CD14-positive monocyte (primary cell): ENCODE measurements at regions of chr10 and their contacts with region 1.

Region 1: GRCh38 chr10:68720793-68721672 is at the start of gene CCAR1:
- DNase-seq: peak; percentile 98 to 99 (median 98)
- H3K4me3 ChIP-seq: peak within 1 kb of the TSS; percentile 87 to 95 (median 89)
- H3K4me3 Mint-ChIP-seq: peak within 1 kb of the TSS; percentile 96 to 98
- H3K27ac ChIP-seq: peak within 1 kb of the TSS; percentile 92 to 93
- H3K27ac Mint-ChIP-seq: peak within 1 kb of the TSS; percentile 96 to 99 (median 98)
- H3K4me1 ChIP-seq: peaks cover 11% of the 10 kb centered on the region in 2 donors
- H3K4me1 Mint-ChIP-seq: peaks cover 10% of the 10 kb centered on the region
- H3K27me3 ChIP-seq: no peaks in the 10 kb centered on the region
- H3K27me3 Mint-ChIP-seq: peaks cover 3 to 8% (median 5%) of the 10 kb centered on the region in 3 donors
- CTCF ChIP-seq: no peak
- polyA plus RNA-seq, gene CCAR1: 16.7 to 26.3 (median 23.4) TPM

Region 2: DNA sequence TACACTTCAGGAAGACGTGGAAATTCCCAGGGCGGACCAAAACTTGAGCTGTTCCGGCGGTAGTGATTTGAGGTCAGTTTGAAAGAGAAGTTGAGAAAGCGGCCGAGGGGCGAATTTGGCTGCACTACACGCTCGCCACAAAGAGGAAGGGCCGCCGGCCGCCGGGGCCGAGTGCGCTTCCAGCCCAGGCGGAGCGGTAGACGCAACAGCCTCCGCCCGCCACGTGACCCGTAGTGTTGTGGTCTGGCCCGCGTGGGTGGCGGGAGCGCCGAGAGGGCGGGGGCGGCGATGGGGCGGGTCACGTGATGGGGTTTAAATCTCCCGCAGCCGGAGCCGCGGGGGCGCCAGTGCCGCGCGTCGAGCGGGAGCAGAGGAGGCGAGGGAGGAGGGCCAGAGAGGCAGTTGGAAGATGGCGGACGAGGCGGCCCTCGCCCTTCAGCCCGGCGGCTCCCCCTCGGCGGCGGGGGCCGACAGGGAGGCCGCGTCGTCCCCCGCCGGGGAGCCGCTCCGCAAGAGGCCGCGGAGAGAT is 836.7 kb before region 1 on chr10 and contains the start of gene SIRT1:
- intact Hi-C with region 1: loop called in 1 of 2 experiments (anchors 10 kb)
- DNase-seq: peak; percentile 96 to 97 (median 97)
- H3K4me3 ChIP-seq: peak within 1 kb of the TSS; percentile 59 to 89 (median 69)
- H3K4me3 Mint-ChIP-seq: peak within 1 kb of the TSS; percentile 89 to 94
- H3K27ac ChIP-seq: peak within 1 kb of the TSS; percentile 73 to 87
- H3K27ac Mint-ChIP-seq: peak within 1 kb of the TSS; percentile 93 to 97 (median 96)
- H3K4me1 ChIP-seq: peaks cover 24 to 32% of the 10 kb centered on the region in 2 donors
- H3K4me1 Mint-ChIP-seq: peaks cover 30% of the 10 kb centered on the region
- H3K27me3 ChIP-seq: no peaks in the 10 kb centered on the region
- H3K27me3 Mint-ChIP-seq: peaks cover 0 to 4% (median 2%) of the 10 kb centered on the region in 3 donors
- CTCF ChIP-seq: no peak
- polyA plus RNA-seq, gene SIRT1: 4.4 to 8.4 (median 8.3) TPM

Region 3: DNA sequence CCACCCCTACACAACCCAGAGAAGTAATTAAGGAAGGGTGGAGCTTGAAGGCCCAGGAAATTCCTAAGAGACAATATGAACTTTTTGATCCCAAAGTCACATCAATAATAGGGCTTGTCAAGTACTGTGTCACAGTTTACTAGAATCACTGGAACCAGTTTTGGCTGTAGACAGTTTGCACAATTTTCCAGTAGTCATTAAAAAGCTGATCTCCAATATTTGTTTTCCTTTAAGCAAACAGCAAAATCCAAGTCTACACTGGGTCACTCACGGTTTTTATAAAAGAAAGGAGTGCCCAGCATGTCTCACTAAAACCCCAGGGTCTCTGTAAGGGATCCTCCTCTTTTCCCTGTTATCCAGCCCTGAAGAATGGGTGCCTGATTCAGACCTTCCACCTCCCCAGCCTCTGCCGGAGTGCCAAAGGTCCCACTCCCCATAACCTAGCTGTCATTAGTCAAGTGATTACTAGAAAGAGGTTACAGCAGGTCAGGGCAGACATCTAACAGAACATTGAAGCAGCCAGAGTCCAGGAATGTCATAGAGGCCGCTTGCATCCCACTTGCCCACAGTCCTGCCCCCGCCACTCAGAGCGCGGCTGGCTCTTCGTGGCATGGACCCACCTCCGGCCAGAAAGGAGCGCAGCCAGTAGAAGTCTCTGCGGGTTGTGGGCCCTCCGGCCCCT is 194.3 kb before region 1 on chr10:
- intact Hi-C with region 1: loop called in 1 of 2 experiments (anchors 10 kb)
- DNase-seq: peak in 1 of 3 donors; percentile 9
- H3K4me3 ChIP-seq: peak overlapping the region; percentile 85 to 99 (median 92)
- H3K4me3 Mint-ChIP-seq: peak overlapping the region; percentile 86 to 91
- H3K27ac ChIP-seq: peak overlapping the region; percentile 75 to 95
- H3K27ac Mint-ChIP-seq: peak overlapping the region; percentile 82 to 95 (median 91)
- H3K4me1 ChIP-seq: peaks cover 14 to 18% of the 10 kb centered on the region in 2 donors
- H3K4me1 Mint-ChIP-seq: peaks cover 20% of the 10 kb centered on the region
- H3K27me3 ChIP-seq: no peaks in the 10 kb centered on the region
- H3K27me3 Mint-ChIP-seq: peaks cover 0 to 2% (median 0%) of the 10 kb centered on the region in 3 donors
- CTCF ChIP-seq: no peak

Region 4: DNA sequence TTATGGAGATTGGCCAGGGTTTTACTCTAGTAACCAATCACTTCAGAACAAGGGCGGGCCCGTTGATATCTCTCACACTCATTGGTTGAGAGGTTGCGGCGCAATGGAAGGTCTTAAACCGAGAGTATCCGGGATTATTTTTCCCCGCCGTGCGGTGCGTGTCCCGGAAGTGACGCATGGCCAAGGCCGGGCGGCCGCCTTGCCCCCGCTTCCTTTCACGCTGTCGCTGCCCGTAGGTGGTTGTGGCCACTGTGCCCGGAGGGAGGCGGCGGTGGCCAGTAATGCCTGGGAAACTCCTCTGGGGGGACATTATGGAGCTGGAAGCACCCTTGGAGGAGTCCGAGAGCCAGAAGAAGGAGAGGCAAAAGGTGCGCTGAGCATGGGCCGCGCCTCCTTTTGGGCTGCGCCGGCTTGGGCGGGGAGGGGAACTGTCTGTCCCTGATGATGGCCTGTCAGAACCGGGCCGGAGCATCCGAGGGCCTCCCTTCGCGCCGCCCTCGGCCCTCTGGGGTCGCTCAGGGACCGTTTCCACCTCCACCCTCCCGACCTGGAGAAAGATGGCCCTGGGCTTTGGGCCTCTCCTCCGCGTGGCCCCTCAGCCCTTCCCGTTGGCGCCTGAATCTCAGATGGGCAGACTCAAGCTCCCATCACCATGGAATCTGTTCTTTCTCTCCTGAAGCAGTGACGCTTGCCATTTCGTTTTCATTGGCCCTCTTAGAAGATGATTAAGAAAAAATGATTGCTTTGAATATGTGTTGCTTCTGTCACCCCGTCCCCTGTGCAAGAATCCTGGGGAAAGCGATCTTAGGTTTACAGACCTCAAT is 180.3 kb after region 1 on chr10 and contains the start of gene DDX50:
- intact Hi-C with region 1: loop called in 1 of 2 experiments (anchors 5 kb)
- DNase-seq: peak; percentile 98 to 100 (median 99)
- H3K4me3 ChIP-seq: peak within 1 kb of the TSS; percentile 82 to 87 (median 84)
- H3K4me3 Mint-ChIP-seq: peak within 1 kb of the TSS; percentile 91 to 97
- H3K27ac ChIP-seq: peak within 1 kb of the TSS; percentile 86 to 98
- H3K27ac Mint-ChIP-seq: peak within 1 kb of the TSS; percentile 94 to 98 (median 97)
- H3K4me1 ChIP-seq: peaks cover 15 to 22% of the 10 kb centered on the region in 2 donors
- H3K4me1 Mint-ChIP-seq: peaks cover 29% of the 10 kb centered on the region
- H3K27me3 ChIP-seq: no peaks in the 10 kb centered on the region
- H3K27me3 Mint-ChIP-seq: peaks cover 0 to 2% (median 0%) of the 10 kb centered on the region in 3 donors
- CTCF ChIP-seq: no peak
- polyA plus RNA-seq, gene DDX50: 14.2 to 17.1 (median 17.0) TPM